ENCODE measurements at regions of chr12 and their contacts with region 1.

Region 1: GRCh38 chr12:47032644-47033043 is 46.8 kb upstream of the PCED1B start:
- DNase-seq: peak in 2 of 4 experiments; percentile 14 to 61
- ATAC-seq: peak; percentile 86
- H3K4me3 ChIP-seq: no peak overlapping the region
- H3K27ac ChIP-seq: no peak overlapping the region
- H3K4me1 ChIP-seq: no peaks in the 10 kb centered on the region
- H3K27me3 ChIP-seq: no peaks in the 10 kb centered on the region; a peak in 1 of 5 replicates
- CTCF ChIP-seq: peak; percentile 42 to 77 (median 57); a peak in 5 of 6 replicates
- EP300 ChIP-seq: no peak
- POLR2A ChIP-seq: no peak
- RAD21 ChIP-seq: peak; percentile 93

Region 2: DNA sequence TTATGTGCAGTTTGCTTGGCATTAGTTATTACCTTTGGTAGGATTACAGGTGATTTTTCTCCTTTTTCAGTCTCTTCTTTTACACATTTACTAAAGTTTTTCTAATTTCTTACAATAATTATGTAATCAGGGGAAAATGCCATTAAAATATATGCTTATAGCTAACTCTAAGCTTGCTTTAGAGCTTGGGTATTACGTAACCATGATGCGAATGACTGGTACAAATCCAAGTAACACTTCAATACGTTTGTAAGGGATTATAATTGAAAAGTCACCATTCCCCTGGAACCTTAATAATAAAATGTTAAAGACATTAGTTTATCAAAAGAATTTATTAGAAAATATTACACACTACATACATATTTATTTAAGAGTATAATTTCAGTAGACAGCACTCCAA is 1113.8 kb before region 1 on chr12:
- CTCF ChIA-PET with region 1: no interaction called
- POLR2A ChIA-PET with region 1: no interaction called
- in situ Hi-C with region 1: no loop called
- intact Hi-C with region 1: no loop called
- DNase-seq: no peak
- ATAC-seq: no peak
- H3K4me3 ChIP-seq: no peak overlapping the region
- H3K27ac ChIP-seq: no peak overlapping the region
- H3K4me1 ChIP-seq: no peaks in the 10 kb centered on the region
- H3K27me3 ChIP-seq: no peaks in the 10 kb centered on the region
- CTCF ChIP-seq: no peak
- EP300 ChIP-seq: no peak
- POLR2A ChIP-seq: no peak
- RAD21 ChIP-seq: no peak

Region 3: GRCh38 chr12:47071241-47071852 is 38.7 kb after region 1 on chr12:
- CTCF ChIA-PET with region 1: interaction called, 3 read pairs
- POLR2A ChIA-PET with region 1: no interaction called
- in situ Hi-C with region 1: no loop called
- intact Hi-C with region 1: loop called (anchors 1 kb)
- DNase-seq: peak; percentile 33 to 58 (median 47)
- ATAC-seq: peak; percentile 82
- H3K4me3 ChIP-seq: no peak overlapping the region
- H3K27ac ChIP-seq: no peak overlapping the region
- H3K4me1 ChIP-seq: no peaks in the 10 kb centered on the region
- H3K27me3 ChIP-seq: no peaks in the 10 kb centered on the region
- CTCF ChIP-seq: peak; percentile 66 to 72 (median 68)
- EP300 ChIP-seq: no peak
- POLR2A ChIP-seq: no peak
- RAD21 ChIP-seq: peak; percentile 45 to 68; a peak in 3 of 4 replicates

Region 4: GRCh38 chr12:47190271-47190750 is 157.7 kb after region 1 on chr12:
- CTCF ChIA-PET with region 1: no interaction called
- POLR2A ChIA-PET with region 1: no interaction called
- in situ Hi-C with region 1: no loop called
- intact Hi-C with region 1: loop called (anchors 5 kb)
- DNase-seq: no peak
- ATAC-seq: no peak
- H3K4me3 ChIP-seq: no peak overlapping the region
- H3K27ac ChIP-seq: no peak overlapping the region
- H3K4me1 ChIP-seq: peaks cover 3 to 49% of the 10 kb centered on the region in 2 experiments; a peak in 4 of 5 replicates
- H3K27me3 ChIP-seq: no peaks in the 10 kb centered on the region
- CTCF ChIP-seq: 0 out of 6 replicates have a peak, but pooled peaks of 1 of the 3 experiments have one; percentile 5
- EP300 ChIP-seq: no peak
- POLR2A ChIP-seq: no peak
- RAD21 ChIP-seq: peak in 1 of 2 experiments; percentile 31; a peak in 1 of 4 replicates

Region 5: GRCh38 chr12:47307680-47308399 is 275.2 kb after region 1 on chr12:
- CTCF ChIA-PET with region 1: no interaction called
- POLR2A ChIA-PET with region 1: no interaction called
- in situ Hi-C with region 1: loop called (anchors 10 kb)
- intact Hi-C with region 1: loop called (anchors 2 kb)
- DNase-seq: peak; percentile 13 to 70 (median 35)
- ATAC-seq: peak; percentile 95
- H3K4me3 ChIP-seq: no peak overlapping the region
- H3K27ac ChIP-seq: no peak overlapping the region
- H3K4me1 ChIP-seq: peaks cover 0 to 4% of the 10 kb centered on the region in 2 experiments; a peak in 2 of 5 replicates
- H3K27me3 ChIP-seq: no peaks in the 10 kb centered on the region
- CTCF ChIP-seq: peak; percentile 64 to 71 (median 70)
- EP300 ChIP-seq: no peak
- POLR2A ChIP-seq: no peak
- RAD21 ChIP-seq: peak; percentile 59 to 96

Region 6: DNA sequence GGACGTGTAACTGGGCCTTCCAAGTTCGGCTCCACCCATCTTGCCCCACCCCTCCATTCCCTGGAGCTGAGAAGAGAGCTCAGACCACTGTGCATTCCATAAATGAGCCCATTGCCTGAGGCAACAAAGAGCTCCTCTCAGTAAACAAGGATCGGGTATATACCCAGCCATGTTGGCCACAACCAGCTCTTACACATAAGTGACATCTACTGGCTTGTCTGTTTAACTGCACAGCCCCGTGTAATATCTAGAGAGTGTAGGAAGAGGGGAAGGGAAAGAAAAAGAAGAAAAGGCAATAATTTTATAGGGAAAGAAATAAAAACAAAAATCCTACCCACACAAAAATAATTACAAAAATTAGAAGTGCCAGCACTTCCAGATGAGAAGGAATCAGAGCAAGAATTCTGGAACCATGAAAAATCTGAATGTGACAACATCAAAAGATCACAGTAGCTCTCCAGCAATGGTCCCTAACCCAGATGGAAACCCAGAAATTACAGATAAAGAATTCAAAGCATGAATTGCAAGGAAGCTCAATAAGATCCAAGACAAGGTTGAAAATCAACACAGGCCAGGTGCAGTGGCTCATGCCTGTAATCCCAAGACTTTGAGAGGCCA is 365.1 kb after region 1 on chr12:
- CTCF ChIA-PET with region 1: interaction called, 3 read pairs
- POLR2A ChIA-PET with region 1: no interaction called
- in situ Hi-C with region 1: loop called (anchors 5 kb)
- intact Hi-C with region 1: loop called (anchors 2 kb)
- DNase-seq: peak in 2 of 4 experiments; percentile 32 to 57
- ATAC-seq: peak; percentile 95
- H3K4me3 ChIP-seq: no peak overlapping the region
- H3K27ac ChIP-seq: no peak overlapping the region
- H3K4me1 ChIP-seq: peaks cover 0 to 8% of the 10 kb centered on the region in 2 experiments; a peak in 1 of 5 replicates
- H3K27me3 ChIP-seq: no peaks in the 10 kb centered on the region
- CTCF ChIP-seq: peak; percentile 46 to 71 (median 56); a peak in 5 of 6 replicates
- EP300 ChIP-seq: no peak
- POLR2A ChIP-seq: no peak
- RAD21 ChIP-seq: peak; percentile 65 to 86

Region 7: DNA sequence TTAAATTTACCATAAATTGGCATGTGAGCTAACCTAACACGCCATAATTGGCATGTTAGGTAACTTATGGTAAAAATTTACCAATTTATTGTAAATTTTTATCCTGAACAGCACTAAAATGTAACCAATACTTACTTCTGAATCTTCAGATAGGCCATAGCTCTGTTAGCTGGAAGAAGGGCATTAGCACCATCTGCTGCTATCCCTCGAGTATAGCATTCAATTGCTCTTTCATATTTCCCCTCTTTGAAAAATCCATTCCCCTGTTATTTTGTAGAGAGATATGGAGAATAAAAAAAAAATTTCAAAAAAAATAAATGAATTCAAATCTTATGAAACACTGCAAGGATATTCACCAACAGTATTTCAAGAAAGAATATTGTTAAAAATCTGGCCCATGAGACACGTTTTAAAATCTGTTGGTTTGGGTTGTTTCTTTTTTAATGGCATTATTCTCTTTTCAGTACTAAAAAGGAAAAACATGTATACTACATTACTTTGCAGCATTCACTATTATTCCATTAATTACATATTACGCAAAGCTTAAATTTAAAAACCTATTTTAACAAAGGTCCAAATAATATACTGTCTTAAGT is 654.1 kb after region 1 on chr12:
- CTCF ChIA-PET with region 1: interaction called, 13 read pairs
- POLR2A ChIA-PET with region 1: no interaction called
- in situ Hi-C with region 1: no loop called
- intact Hi-C with region 1: loop called (anchors 1 kb)
- DNase-seq: peak; percentile 22 to 39 (median 34)
- ATAC-seq: peak; percentile 83
- H3K4me3 ChIP-seq: no peak overlapping the region
- H3K27ac ChIP-seq: no peak overlapping the region
- H3K4me1 ChIP-seq: no peaks in the 10 kb centered on the region
- H3K27me3 ChIP-seq: no peaks in the 10 kb centered on the region
- CTCF ChIP-seq: peak; percentile 21 to 72 (median 55); a peak in 4 of 6 replicates
- EP300 ChIP-seq: no peak
- POLR2A ChIP-seq: no peak
- RAD21 ChIP-seq: peak; percentile 73 to 87

Measured in K562 (cell line).